ENCODE measurements at regions of chr14 and their contacts with region 1.

Region 1: GRCh38 chr14:30532264-30532663 is 26.7 kb upstream of the G2E3 start:
- DNase-seq: no peak
- ATAC-seq: no peak
- H3K4me3 ChIP-seq: no peak overlapping the region
- H3K4me3 Mint-ChIP-seq: no peak overlapping the region
- H3K27ac ChIP-seq: no peak overlapping the region
- H3K27ac Mint-ChIP-seq: no peak overlapping the region
- H3K4me1 ChIP-seq: no peaks in the 10 kb centered on the region
- H3K4me1 Mint-ChIP-seq: no peaks in the 10 kb centered on the region
- H3K27me3 ChIP-seq: no peaks in the 10 kb centered on the region
- H3K27me3 Mint-ChIP-seq: peaks cover 11 to 14% of the 10 kb centered on the region in 2 donors

Region 2: DNA sequence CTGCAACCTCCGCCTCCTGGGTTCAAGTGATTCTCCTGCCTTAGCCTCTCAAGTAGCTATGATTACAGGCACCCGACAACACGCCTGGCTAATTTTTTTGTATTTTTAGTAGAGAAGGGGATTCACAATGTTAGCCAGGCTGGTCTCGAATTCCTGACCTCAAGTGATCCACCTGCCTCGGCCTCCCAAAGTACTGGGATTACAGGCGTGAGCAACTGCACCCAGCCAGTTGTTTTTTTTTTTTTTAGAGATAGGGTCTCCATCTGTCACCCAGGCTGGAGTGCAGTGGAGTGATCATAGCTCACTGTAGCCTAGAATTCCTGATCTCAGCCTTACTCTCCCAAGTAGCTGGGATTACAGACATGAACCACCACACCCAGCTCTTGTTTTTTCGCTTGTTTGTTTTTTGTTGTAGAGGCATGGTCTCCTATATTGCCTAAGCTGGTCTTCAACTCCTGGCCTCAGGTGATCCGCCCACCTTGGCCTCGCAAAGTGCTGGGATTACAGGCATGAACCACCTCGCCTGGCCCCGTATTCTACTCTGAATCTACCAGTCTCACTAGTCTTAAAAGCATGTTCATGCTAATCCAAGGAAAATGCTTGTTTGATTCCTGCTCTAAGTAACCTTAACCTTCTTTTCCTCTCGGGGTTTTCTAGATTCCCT is 525.6 kb after region 1 on chr14:
- CTCF ChIA-PET with region 1: interaction called in 1 of 2 experiments, 11 read pairs
- POLR2A ChIA-PET with region 1: no interaction called
- DNase-seq: no peak
- ATAC-seq: no peak
- H3K4me3 ChIP-seq: no peak overlapping the region
- H3K4me3 Mint-ChIP-seq: no peak overlapping the region
- H3K27ac ChIP-seq: no peak overlapping the region
- H3K27ac Mint-ChIP-seq: no peak overlapping the region
- H3K4me1 ChIP-seq: no peaks in the 10 kb centered on the region
- H3K4me1 Mint-ChIP-seq: peaks cover 12 to 16% (median 14%) of the 10 kb centered on the region in 3 donors
- H3K27me3 ChIP-seq: no peaks in the 10 kb centered on the region
- H3K27me3 Mint-ChIP-seq: no peaks in the 10 kb centered on the region